Mammary epithelial cell (primary cell): ENCODE measurements at regions of chr5 and their contacts with region 1.

Region 1: DNA sequence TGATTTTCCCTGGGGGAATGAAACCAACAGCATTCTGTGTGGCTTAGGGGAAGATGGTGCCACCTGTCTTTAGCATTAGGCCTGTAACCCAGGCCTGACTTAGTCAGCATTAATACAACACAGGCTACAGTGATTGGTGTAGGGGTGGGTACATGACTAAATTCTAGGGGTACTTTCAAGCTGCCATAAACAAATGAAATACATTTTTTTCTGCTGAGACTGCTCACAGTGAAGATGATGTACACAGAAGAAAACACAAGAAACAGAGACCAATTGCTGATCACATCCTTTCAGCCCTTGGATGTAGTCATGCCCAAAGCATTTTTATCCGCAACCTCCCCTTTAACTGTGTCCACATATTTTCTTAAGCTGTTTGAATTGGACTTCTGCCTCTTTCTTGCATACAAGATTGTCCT is 527.2 kb downstream of the KCTD16 start:
- DNase-seq: peak; percentile 97
- H3K4me3 ChIP-seq: no peak overlapping the region
- H3K27ac ChIP-seq: no peak overlapping the region
- H3K4me1 ChIP-seq: peaks cover 9% of the 10 kb centered on the region
- H3K27me3 ChIP-seq: no peaks in the 10 kb centered on the region
- CTCF ChIP-seq: peak in 1 of 2 donors; percentile 39

Region 2: GRCh38 chr5:144390133-144390532 is 307.7 kb before region 1 on chr5:
- CTCF ChIA-PET with region 1: no interaction called
- dilution Hi-C with region 1: no loop called
- in situ Hi-C with region 1: no loop called
- intact Hi-C with region 1: no loop called
- DNase-seq: peak; percentile 6
- H3K4me3 ChIP-seq: no peak overlapping the region
- H3K27ac ChIP-seq: no peak overlapping the region
- H3K4me1 ChIP-seq: no peaks in the 10 kb centered on the region
- H3K27me3 ChIP-seq: peaks cover 2% of the 10 kb centered on the region
- CTCF ChIP-seq: peak; percentile 38 to 58

Region 3: DNA sequence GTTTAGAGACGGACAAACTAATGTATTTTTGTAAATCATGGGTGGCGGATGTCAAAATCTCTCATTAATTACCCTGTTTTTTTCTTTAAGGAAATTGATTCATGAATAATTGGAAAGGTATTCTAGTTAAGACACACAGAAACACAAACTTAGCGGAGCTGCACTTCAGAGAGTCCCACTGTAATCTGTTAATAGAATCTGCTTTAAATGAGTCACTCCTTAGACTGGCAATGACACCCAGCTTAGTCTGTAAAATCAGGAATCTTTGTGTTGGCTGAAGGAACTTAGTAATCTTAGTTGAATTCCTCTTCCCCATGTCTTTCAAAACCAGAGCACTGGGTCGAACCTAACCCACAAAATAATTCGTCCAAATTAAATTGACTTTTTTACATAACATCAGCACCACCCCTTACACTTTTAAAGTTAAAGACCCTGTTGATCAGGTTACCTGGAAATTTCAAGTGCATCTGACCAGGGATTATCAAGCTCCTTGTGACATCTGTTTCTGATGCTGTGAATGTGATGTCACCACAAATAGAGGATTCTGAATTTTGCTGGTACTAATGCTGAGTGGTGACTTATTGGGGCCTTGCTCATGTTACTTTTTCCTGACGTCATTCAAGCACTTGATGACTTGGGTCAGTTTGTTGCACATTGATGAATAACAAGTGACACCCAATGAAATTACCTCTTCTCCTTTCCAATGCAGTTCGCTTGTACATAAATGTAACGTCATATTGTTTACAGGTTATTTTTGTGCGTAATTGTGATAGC is 213.5 kb before region 1 on chr5:
- CTCF ChIA-PET with region 1: no interaction called
- dilution Hi-C with region 1: no loop called
- in situ Hi-C with region 1: no loop called
- intact Hi-C with region 1: loop called (anchors 10 kb)
- DNase-seq: peak; percentile 32
- H3K4me3 ChIP-seq: no peak overlapping the region
- H3K27ac ChIP-seq: no peak overlapping the region
- H3K4me1 ChIP-seq: no peaks in the 10 kb centered on the region
- H3K27me3 ChIP-seq: peaks cover 3% of the 10 kb centered on the region
- CTCF ChIP-seq: no peak

Region 4: DNA sequence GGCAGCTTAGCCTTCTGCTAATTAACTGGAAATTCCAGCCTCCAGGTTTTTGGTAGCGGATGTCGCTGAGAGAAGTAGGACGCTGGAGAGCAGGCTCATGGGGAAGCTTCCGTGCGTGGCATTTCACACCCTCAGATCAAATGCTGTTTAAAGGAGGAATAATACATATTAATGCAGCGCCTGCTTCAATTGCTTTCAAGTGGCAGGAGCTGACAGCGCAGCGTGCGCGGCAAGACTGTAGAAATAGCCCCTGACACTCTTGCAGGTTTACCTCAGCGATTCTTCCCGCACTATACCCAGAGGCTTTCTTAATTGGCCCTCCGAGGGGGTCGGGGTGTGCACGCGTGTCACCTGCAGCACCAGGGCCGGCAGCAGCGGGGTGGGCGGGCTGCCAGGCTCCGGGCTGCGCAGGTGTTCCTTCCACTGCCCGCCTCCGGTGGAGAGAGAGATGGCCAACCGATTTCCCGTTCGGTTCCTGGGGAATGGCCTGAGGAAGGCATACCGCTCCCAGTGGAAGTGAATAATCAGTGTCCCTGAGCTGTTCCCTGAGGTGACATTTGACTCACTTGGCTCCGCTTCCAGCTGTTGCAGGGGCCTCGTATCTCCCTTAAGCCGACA is 99.3 kb before region 1 on chr5:
- CTCF ChIA-PET with region 1: no interaction called
- dilution Hi-C with region 1: no loop called
- in situ Hi-C with region 1: no loop called
- intact Hi-C with region 1: no loop called
- DNase-seq: no peak
- H3K4me3 ChIP-seq: peak overlapping the region in 1 of 3 experiments; percentile 35
- H3K27ac ChIP-seq: no peak overlapping the region
- H3K4me1 ChIP-seq: no peaks in the 10 kb centered on the region
- H3K27me3 ChIP-seq: no peaks in the 10 kb centered on the region
- CTCF ChIP-seq: peak in 1 of 2 donors; percentile 9

Region 5: DNA sequence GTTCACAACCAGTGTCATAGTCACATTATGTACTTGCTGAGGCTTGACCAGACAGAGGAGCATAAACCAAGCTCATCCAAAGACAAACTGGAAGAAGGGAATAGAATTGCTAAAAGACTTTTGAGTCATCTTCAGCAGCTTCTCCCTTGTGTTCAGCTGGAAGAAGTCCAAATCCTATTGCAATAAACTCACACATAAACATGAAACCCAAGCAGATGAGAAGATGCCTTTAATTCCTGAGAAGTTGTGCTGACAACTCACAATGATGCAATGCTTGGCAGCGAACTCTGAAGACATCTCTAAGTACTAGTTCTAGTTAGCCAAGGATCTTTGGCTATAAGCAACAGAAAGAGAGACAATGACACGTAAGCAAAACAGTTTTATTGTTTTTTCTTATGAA is 114.9 kb after region 1 on chr5:
- CTCF ChIA-PET with region 1: no interaction called
- dilution Hi-C with region 1: no loop called
- in situ Hi-C with region 1: no loop called
- intact Hi-C with region 1: loop called (anchors 2 kb)
- DNase-seq: peak; percentile 83
- H3K4me3 ChIP-seq: no peak overlapping the region
- H3K27ac ChIP-seq: no peak overlapping the region
- H3K4me1 ChIP-seq: no peaks in the 10 kb centered on the region
- H3K27me3 ChIP-seq: no peaks in the 10 kb centered on the region
- CTCF ChIP-seq: no peak